Stomach (tissue), 19 donors: ENCODE measurements at regions of chrX and their contacts with region 1.

Region 1: DNA sequence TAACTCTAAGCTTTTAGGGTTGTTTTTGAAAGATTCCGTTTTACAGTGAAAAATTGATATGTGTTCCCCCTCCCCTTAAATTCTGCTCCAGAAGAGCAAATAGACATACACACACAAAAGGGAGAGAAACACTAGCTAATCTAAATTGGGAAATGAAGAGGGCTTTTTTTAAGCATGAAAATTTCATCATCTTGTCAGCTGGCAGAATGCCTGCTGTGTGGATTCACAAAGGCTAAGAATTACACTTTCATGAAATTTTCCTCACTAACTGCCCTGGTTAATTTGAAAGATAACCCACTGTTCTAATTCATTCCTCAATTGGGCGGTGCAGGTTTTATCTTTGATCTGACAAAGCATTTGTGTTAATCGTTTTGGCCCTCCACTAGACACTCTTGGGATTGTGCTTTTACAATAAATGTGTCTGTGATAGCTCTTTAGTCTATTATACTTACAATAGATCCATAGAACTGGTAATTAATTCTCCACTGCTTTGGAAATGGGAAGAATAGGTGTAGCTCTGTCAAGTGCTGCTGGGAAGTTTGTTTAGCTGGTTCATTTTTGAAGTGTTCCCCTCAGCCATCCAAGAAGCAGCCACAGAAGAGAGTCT is 152.9 kb downstream of the POLA1 start:
- DNase-seq: peak in 1 of 2 donors; percentile 7
- H3K4me3 ChIP-seq: no peak overlapping the region
- H3K27ac ChIP-seq: no peak overlapping the region
- H3K4me1 ChIP-seq: no peaks in the 10 kb centered on the region
- H3K27me3 ChIP-seq: no peaks in the 10 kb centered on the region
- CTCF ChIP-seq: no peak
- EP300 ChIP-seq: no peak
- POLR2A ChIP-seq: no peak

Region 2: DNA sequence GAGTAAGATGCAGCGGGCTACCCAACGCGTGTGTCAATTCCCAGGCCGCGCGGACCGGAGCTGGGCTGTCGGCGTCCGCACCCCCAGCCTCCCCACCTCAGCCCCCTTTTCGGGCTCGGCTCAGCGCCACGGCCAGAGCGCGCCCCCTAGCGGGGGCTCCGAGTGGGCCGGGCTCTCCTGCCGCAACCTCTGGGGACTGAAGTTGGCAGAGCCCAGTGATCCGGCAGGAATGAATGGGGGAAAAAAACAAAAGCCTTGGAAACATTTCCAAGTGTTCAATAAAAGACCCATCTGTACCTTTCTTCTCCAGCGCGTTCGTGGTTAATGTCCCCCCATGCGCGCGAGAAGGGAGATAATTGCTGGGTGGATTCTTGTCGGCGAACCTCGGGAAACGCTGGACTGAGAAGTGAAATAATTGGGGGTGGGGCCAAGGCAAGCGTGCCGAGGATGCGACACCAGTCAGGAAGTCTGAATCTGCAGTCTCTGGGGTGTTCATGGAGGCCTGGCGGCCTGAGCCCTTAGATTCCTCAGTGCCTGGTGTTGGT is 174.3 kb after region 1 on chrX:
- intact Hi-C with region 1: no loop called
- DNase-seq: peak in 1 of 2 donors; percentile 50
- H3K4me3 ChIP-seq: peak overlapping the region in 2 of 4 donors; percentile 17 to 36
- H3K27ac ChIP-seq: no peak overlapping the region
- H3K4me1 ChIP-seq: peaks cover 0 to 30% (median 16%) of the 10 kb centered on the region in 4 donors
- H3K27me3 ChIP-seq: peaks cover 39 to 98% (median 85%) of the 10 kb centered on the region in 3 donors
- CTCF ChIP-seq: peak in 3 of 7 experiments; percentile 19 to 32 (median 24)
- EP300 ChIP-seq: no peak
- POLR2A ChIP-seq: no peak

Region 3: GRCh38 chrX:25049357-25049756 is 202.7 kb after region 1 on chrX:
- intact Hi-C with region 1: no loop called
- DNase-seq: peak in 1 of 2 donors; percentile 11
- H3K4me3 ChIP-seq: no peak overlapping the region
- H3K27ac ChIP-seq: no peak overlapping the region
- H3K4me1 ChIP-seq: peaks cover 0 to 5% (median 0%) of the 10 kb centered on the region in 4 donors
- H3K27me3 ChIP-seq: no peaks in the 10 kb centered on the region
- CTCF ChIP-seq: no peak
- EP300 ChIP-seq: no peak
- POLR2A ChIP-seq: no peak

Region 4: DNA sequence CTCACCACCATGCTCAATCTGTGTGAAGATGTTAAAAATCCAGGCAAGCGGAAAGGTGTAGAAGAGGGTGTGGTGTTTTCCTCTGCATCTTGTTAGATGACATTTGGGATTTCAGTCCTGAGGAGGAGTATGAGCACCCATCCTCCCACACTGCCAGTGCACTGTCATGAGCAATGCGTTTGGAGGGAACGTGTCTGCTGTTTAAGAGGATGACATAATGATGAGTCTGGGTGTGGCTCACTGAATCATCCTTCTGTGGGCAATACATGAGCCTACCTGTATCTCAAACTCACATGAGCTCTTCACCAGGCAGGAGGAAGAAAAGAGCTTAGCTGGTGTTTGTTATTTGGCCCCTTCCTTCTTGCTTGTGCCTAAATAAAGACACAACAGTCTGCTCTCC is 237.0 kb after region 1 on chrX:
- intact Hi-C with region 1: no loop called
- DNase-seq: no peak
- H3K4me3 ChIP-seq: no peak overlapping the region
- H3K27ac ChIP-seq: no peak overlapping the region
- H3K4me1 ChIP-seq: no peaks in the 10 kb centered on the region
- H3K27me3 ChIP-seq: no peaks in the 10 kb centered on the region
- CTCF ChIP-seq: no peak
- EP300 ChIP-seq: no peak
- POLR2A ChIP-seq: no peak

Region 5: GRCh38 chrX:25144043-25144940 is 297.6 kb after region 1 on chrX:
- intact Hi-C with region 1: loop called (anchors 10 kb)
- DNase-seq: peak; percentile 63 to 80
- H3K4me3 ChIP-seq: peak overlapping the region in 1 of 4 donors; percentile 1
- H3K27ac ChIP-seq: no peak overlapping the region
- H3K4me1 ChIP-seq: peaks cover 0 to 7% (median 0%) of the 10 kb centered on the region in 4 donors
- H3K27me3 ChIP-seq: peaks cover 0 to 7% (median 0%) of the 10 kb centered on the region in 3 donors
- CTCF ChIP-seq: peak in 5 of 7 experiments; percentile 21 to 71 (median 53)
- EP300 ChIP-seq: no peak
- POLR2A ChIP-seq: no peak

Region 6: GRCh38 chrX:25226151-25226550 is 379.5 kb after region 1 on chrX:
- intact Hi-C with region 1: no loop called
- DNase-seq: no peak
- H3K4me3 ChIP-seq: no peak overlapping the region
- H3K27ac ChIP-seq: no peak overlapping the region
- H3K4me1 ChIP-seq: no peaks in the 10 kb centered on the region
- H3K27me3 ChIP-seq: no peaks in the 10 kb centered on the region
- CTCF ChIP-seq: no peak
- EP300 ChIP-seq: no peak
- POLR2A ChIP-seq: no peak